Activated B cell treated with CpG ODN at 0.5 μM for 24 hours (primary cell): ENCODE measurements at regions of chr13 and their contacts with region 1.

Region 1: DNA sequence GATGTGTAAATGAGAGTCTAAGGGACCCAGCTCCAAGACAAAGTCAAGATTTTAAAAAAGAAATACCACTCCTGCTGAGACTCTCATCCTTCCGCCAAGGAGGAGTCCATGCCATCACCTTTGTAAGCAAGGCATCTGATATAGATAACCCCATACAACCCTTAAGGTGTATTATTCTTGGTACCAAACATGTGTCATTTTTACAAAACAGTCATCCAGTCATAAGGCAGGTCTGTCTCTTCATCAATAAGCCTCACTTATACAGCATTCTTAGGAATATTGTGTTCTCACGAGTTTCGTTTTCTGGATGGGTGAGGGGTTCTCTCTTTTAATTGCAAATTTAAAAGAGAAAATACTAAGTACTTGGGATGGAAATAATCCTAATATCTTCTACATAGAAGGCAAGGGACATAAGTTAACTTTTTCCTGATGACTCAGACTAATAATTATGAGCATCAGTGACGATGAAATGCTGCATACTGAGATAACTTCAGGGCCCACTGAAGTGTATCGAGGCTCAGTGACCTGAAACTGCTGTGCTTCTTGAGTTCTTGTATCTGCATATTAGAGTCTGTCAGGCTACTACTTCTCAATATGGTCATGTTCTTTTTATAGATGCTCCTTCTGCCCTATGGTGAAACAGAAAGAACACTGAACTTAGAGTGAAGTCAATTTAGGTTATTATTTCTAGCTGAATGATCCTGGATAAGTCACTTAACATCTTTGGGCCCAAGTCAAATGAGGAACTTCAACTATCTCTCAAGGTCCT is 166.6 kb downstream of the KLF12 start:
- DNase-seq: no peak
- ATAC-seq: peak; percentile 93
- H3K4me3 Mint-ChIP-seq: peak overlapping the region; percentile 57
- H3K27ac Mint-ChIP-seq: peak overlapping the region; percentile 82
- H3K4me1 Mint-ChIP-seq: peaks cover 61% of the 10 kb centered on the region
- H3K27me3 Mint-ChIP-seq: no peaks in the 10 kb centered on the region
- CTCF ChIP-seq: no peak

Region 2: DNA sequence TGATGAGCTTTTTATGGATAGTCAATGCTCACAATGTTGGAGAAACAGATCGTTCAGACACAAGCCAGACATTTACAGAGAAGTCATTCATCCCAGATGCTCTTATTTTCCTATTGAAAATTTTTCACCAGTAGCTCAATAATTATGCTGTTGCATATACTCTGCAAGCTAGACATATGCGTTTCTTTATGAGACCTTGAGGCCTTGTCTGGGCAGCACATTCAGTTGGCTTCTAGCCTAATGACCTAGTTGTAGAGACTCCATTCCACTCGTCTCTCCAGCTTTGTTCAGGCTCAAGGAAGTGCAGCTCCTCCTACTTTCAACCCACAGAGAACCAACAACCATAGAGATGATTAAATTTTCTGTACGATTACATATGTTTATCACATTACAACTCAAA is 1477.8 kb before region 1 on chr13:
- CTCF ChIA-PET with region 1: no interaction called
- POLR2A ChIA-PET with region 1: no interaction called
- intact Hi-C with region 1: no loop called
- DNase-seq: no peak
- ATAC-seq: no peak
- H3K4me3 Mint-ChIP-seq: no peak overlapping the region
- H3K27ac Mint-ChIP-seq: no peak overlapping the region
- H3K4me1 Mint-ChIP-seq: no peaks in the 10 kb centered on the region
- H3K27me3 Mint-ChIP-seq: no peaks in the 10 kb centered on the region
- CTCF ChIP-seq: no peak

Region 3: GRCh38 chr13:73913053-73913740 is 54.4 kb before region 1 on chr13:
- CTCF ChIA-PET with region 1: no interaction called
- POLR2A ChIA-PET with region 1: no interaction called
- intact Hi-C with region 1: loop called (anchors 5 kb)
- DNase-seq: no peak
- ATAC-seq: no peak
- H3K4me3 Mint-ChIP-seq: no peak overlapping the region
- H3K27ac Mint-ChIP-seq: no peak overlapping the region
- H3K4me1 Mint-ChIP-seq: peaks cover 42% of the 10 kb centered on the region
- H3K27me3 Mint-ChIP-seq: no peaks in the 10 kb centered on the region
- CTCF ChIP-seq: no peak

Region 4: DNA sequence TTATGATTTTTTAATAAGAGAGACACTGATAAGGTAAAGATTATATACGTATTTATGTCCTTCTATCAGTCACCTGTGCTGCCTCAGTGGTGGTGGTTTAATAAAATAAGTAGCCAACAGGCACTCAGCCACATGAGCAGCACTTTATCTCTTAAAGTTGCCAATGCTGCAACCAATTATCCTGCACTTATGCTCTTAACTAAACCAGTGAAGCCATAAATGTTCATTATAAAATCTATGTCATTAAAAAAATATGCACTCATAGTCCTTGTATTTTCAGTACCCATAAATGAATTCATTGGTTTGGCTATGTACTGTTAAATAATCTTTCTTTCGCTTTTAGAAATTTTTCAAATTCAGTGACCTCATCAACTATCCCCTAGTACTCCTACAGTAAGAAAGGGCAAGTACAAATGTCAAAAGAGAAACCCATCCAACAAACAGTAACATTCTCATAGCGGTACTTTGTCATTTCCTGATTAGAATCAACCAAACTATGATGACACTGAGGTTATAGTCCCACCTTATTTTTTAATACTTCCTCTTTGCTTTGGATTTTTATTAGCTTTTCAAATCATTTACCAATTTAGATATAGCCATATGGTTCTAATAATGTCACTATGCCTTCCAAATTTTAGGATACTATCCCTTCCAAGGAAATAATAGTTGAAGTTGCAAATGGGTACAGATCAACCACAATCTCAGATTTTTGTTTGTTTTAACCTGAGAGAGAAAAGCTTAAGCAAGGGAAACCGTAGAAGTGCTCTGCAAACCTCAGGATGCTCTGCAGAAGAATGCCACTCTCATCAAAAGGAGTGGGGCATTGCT is 24.2 kb before region 1 on chr13:
- CTCF ChIA-PET with region 1: no interaction called
- POLR2A ChIA-PET with region 1: interaction called, 3 read pairs
- intact Hi-C with region 1: loop called (anchors 1 kb)
- DNase-seq: no peak
- ATAC-seq: peak; percentile 84
- H3K4me3 Mint-ChIP-seq: peak overlapping the region; percentile 13
- H3K27ac Mint-ChIP-seq: peak overlapping the region; percentile 59
- H3K4me1 Mint-ChIP-seq: peaks cover 36% of the 10 kb centered on the region
- H3K27me3 Mint-ChIP-seq: no peaks in the 10 kb centered on the region
- CTCF ChIP-seq: no peak

Region 5: DNA sequence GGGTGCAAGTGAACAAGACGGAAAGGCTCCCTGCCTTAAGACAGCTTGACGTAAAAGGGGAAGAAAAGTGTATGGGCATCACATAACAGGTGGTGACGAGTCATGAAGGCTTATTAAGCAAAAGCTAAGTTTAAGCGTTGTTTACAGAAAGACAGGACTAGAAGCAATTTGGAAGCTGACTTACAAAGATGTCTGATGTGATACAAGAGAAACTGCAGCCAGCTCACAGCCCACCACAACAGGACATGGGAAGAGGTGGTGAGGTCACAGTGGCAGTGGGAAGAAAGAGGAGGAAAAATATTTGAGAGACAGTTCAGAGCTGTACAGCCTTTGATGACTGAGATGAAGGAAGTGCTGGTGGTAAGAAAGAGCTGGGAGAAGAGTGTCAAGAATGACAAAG is 14.9 kb before region 1 on chr13:
- CTCF ChIA-PET with region 1: no interaction called
- POLR2A ChIA-PET with region 1: interaction called, 4 read pairs
- intact Hi-C with region 1: loop called (anchors 1 kb)
- DNase-seq: no peak
- ATAC-seq: no peak
- H3K4me3 Mint-ChIP-seq: no peak overlapping the region
- H3K27ac Mint-ChIP-seq: no peak overlapping the region
- H3K4me1 Mint-ChIP-seq: peaks cover 51% of the 10 kb centered on the region
- H3K27me3 Mint-ChIP-seq: no peaks in the 10 kb centered on the region
- CTCF ChIP-seq: no peak

Region 6: DNA sequence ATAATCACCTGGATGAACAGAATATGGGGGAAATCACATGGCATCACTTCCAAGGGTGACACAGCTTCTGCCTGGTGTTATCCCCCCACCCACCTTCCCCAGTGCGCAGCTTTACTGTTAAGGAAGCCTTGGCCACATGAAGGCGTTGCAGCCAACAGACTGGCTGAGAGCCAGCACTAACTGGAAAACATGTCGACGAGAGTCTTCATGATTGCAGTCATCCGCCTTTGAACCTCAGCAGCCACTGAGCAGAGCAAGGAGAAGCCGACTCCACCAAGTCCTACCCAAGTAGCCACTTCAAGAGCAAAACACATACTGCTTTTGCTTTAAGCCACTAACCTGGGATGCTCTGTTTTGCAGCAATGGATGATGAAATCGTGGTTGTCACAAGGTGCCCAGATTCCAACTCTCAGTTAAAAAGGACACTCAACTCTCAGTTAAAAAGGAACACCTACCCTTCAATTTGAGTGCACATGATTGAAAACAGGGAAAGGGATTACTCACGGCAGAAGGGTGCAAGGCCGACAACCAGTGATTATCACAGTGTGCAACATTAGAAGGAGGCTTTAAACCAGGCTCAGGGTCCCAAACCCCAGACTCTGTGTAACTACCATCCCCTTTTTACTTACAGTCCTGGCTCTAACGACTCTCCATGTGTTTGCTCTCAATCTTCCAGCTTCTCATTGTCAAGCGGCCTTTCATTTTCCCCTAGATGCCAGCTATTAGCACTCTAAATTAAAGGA is 17.5 kb after region 1 on chr13:
- CTCF ChIA-PET with region 1: no interaction called
- POLR2A ChIA-PET with region 1: interaction called, 3 read pairs
- intact Hi-C with region 1: loop called (anchors 2 kb)
- DNase-seq: no peak
- ATAC-seq: no peak
- H3K4me3 Mint-ChIP-seq: no peak overlapping the region
- H3K27ac Mint-ChIP-seq: peak overlapping the region; percentile 54
- H3K4me1 Mint-ChIP-seq: peaks cover 32% of the 10 kb centered on the region
- H3K27me3 Mint-ChIP-seq: no peaks in the 10 kb centered on the region
- CTCF ChIP-seq: no peak

Region 7: DNA sequence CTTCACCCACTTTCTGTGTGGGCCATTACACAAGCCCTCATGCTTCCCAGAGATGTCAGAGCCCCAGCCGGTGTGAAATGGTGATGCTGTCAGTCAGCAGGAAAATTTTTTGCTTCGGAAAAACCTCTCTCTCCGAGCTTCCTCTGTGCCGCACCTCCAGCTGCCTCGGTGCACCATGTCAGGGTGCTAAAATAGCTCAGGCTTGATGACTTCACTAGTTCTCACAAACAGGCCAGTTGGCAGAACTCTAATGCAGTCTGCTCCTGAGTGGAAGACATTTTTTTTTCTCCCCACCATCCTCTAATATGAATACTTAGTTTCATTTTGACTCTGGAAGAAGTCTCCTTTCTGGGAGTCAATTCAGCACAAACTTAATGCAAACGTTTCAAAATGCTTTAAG is 95.4 kb after region 1 on chr13:
- CTCF ChIA-PET with region 1: no interaction called
- POLR2A ChIA-PET with region 1: interaction called, 3 read pairs
- intact Hi-C with region 1: loop called (anchors 2 kb)
- DNase-seq: no peak
- ATAC-seq: peak; percentile 69
- H3K4me3 Mint-ChIP-seq: peak overlapping the region; percentile 77
- H3K27ac Mint-ChIP-seq: peak overlapping the region; percentile 88
- H3K4me1 Mint-ChIP-seq: peaks cover 86% of the 10 kb centered on the region
- H3K27me3 Mint-ChIP-seq: no peaks in the 10 kb centered on the region
- CTCF ChIP-seq: no peak